ENCODE measurements at regions of chr3 and their contacts with region 1.

Region 1: DNA sequence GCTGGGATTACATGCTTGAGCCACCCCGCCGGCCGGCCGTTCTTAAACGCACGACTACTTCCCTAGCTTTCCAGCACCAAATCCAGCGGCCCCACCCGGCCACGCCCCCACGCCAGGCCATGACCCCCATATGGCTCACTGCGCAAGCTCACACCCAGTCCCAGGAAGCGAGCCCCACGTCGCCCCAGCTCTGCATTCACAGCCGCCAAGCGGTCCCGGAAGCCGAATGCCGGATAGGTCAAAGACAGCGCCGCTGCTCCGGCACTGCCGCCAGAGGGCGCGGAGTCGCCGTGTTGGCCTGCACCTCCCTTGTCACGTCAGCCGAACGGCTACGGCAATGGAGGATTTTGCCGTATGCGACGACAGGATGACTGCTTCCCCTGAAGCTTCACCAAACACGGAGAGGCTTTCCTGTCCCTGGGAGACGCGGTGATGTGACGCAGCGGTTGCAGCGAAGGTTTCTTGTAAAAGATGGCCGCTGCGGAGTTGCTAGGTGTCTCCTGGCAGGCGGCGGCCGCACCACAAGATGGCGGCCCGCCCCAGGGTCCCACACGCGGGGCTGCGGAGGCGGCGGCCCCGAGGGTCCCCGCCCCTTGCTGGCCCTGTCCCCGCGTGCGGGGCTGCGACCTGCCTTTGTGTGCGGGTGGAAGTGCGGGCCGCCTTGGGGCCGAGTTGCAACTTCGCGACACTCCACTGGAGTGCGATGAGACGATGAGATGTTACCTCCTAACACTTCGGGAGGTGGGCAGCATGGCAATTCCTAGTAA is 30.2 kb upstream of the RPN1 start:
- DNase-seq: peak; percentile 98 to 99
- H3K4me3 ChIP-seq: peak overlapping the region; percentile 29 to 77 (median 66)
- H3K27ac ChIP-seq: peak overlapping the region; percentile 99
- H3K4me1 ChIP-seq: peaks cover 0 to 4% (median 2%) of the 10 kb centered on the region in 4 experiments; a peak in 1 of 7 replicates
- H3K27me3 ChIP-seq: peaks cover 3 to 17% (median 12%) of the 10 kb centered on the region in 4 experiments
- CTCF ChIP-seq: peak; percentile 95 to 100 (median 99)
- EP300 ChIP-seq: peak in 1 of 2 experiments; percentile 5; a peak in 2 of 3 replicates
- POLR2A ChIP-seq: peak; percentile 78 to 91
- RAD21 ChIP-seq: peak; percentile 78 to 79

Region 2: DNA sequence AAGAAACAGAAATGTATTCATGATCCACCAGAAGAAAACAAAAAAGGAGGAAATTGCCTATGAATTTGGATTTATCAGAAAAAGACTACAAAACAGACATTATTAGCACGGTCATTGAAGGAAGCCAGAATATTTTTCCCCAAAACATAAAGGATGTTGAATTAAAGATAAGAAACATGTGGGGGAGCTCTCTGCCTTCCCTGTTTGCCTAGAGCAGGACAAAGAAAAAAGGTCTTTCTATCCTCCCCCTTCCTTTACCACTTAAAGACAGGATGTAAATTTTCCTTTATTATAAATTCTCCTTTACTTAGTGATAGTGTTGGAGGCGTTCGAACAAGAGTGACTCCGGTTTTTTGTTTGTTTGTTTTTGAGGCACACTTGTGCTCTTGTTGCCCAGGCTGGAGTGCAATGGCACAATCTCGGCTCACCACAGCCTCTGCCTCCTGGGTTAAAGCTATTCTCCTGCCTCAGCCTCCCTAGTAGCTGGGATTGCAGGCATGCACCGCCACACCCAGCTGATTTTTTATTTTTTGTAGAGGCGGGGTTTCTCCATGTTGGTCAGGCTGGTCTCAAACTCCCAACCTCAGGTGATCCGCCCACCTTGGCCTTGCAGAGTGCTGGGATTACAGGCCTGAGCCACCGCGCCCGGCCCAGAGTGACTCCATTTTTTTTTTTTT is 15.3 kb before region 1 on chr3:
- CTCF ChIA-PET with region 1: interaction called, 12 read pairs
- POLR2A ChIA-PET with region 1: interaction called, 13 read pairs
- DNase-seq: no peak
- H3K4me3 ChIP-seq: no peak overlapping the region
- H3K27ac ChIP-seq: no peak overlapping the region
- H3K4me1 ChIP-seq: no peaks in the 10 kb centered on the region
- H3K27me3 ChIP-seq: no peaks in the 10 kb centered on the region
- CTCF ChIP-seq: peak in 1 of 3 experiments; percentile 8; a peak in 2 of 4 replicates
- EP300 ChIP-seq: no peak
- POLR2A ChIP-seq: no peak
- RAD21 ChIP-seq: peak; percentile 48 to 51; a peak in 3 of 4 replicates

Region 3: DNA sequence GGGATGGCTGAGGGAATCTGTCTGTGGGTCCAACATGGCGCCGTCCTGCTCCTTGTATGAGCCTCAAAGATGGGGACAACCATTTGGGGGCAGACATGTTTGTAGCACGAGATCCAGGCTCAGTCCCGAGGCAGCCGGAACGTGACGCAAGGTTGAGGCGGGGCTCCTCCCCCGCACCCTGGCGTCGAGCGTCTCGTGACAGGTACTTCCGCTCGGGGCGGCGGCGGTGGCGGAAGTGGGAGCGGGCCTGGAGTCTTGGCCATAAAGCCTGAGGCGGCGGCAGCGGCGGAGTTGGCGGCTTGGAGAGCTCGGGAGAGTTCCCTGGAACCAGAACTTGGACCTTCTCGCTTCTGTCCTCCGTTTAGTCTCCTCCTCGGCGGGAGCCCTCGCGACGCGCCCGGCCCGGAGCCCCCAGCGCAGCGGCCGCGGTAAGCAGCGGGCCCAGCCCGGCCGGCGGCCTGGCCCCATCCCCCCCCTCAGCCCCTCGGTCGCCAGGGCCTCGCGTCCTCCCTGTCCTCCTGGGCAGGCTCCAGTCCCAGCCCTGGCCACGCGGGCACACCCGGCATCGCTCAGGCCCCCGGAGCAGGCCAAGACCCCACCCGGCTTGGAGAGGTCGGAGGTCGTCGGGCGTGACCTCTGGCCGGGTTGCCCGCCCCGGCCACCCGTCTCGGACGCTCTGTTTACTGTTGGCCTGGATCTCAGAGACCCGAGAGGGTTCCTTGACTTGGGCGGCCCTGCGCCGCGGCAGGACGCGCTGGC is 45.3 kb after region 1 on chr3 and contains the start of gene RAB7A:
- CTCF ChIA-PET with region 1: interaction called, 5 read pairs
- POLR2A ChIA-PET with region 1: interaction called, 44 read pairs
- DNase-seq: peak; percentile 93 to 96
- H3K4me3 ChIP-seq: peak within 1 kb of the TSS; percentile 80 to 94 (median 91)
- H3K27ac ChIP-seq: peak within 1 kb of the TSS; percentile 88
- H3K4me1 ChIP-seq: peaks cover 6 to 32% (median 21%) of the 10 kb centered on the region in 4 experiments
- H3K27me3 ChIP-seq: no peaks in the 10 kb centered on the region
- CTCF ChIP-seq: no peak
- EP300 ChIP-seq: peak in 1 of 2 experiments; percentile 59; a peak in 2 of 3 replicates
- POLR2A ChIP-seq: peak; percentile 91 to 98
- RAD21 ChIP-seq: no peak
- total RNA-seq, gene RAB7A: 185 and 195 TPM in 2 replicates

Region 4: DNA sequence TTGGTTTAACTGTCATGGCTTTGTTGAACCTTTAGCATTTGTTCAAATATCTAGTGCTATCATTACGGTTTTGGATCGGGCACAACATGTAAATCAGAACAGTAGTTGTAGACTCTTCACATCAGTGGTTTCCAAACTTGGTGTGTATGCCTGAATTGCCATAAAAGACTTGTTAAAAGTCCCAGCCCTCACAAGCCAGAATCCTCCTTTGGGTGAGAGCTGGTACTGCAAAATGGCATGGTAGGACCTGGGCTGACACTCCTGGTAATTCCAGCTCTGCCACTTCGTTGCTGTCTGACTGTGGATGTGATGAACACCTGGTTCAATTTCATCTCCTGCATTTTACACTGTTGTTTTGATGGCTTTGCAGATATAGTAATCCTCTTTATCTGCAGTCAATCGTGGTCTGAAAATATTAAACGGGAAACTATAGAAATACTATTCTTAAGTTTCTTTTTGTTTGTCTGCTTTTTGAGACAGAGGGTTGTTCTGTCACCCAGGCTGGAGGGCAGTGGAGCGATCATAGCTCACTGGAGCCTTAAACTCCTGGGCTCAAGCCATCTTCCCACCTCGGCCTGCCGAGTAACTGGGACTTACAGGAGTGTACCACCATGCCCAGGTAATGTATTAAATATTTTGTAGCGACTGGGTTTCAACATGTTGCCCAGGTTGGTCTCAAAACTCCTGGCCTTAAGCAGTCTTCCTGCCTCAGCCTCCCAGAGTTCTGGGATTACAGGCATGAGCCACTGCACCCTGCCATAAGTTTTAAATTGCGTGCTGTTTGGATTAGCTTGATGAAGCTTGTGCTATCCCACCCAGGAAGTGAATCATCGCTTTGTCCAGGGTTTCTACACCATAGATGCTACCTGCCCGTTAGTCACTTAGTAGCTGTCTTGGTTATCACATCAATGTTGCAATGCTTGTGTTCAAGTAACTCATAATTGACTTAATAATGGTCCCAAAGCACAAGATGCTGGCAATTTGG is 106.8 kb after region 1 on chr3:
- CTCF ChIA-PET with region 1: interaction called, 64 read pairs
- POLR2A ChIA-PET with region 1: interaction called, 5 read pairs
- DNase-seq: peak in 1 of 2 experiments; percentile 62
- H3K4me3 ChIP-seq: no peak overlapping the region
- H3K27ac ChIP-seq: no peak overlapping the region
- H3K4me1 ChIP-seq: peaks cover 0 to 11% (median 10%) of the 10 kb centered on the region in 4 experiments; a peak in 3 of 7 replicates
- H3K27me3 ChIP-seq: no peaks in the 10 kb centered on the region
- CTCF ChIP-seq: peak; percentile 42 to 68 (median 53)
- EP300 ChIP-seq: no peak
- POLR2A ChIP-seq: no peak
- RAD21 ChIP-seq: peak; percentile 27 to 37; a peak in 3 of 4 replicates

Region 5: DNA sequence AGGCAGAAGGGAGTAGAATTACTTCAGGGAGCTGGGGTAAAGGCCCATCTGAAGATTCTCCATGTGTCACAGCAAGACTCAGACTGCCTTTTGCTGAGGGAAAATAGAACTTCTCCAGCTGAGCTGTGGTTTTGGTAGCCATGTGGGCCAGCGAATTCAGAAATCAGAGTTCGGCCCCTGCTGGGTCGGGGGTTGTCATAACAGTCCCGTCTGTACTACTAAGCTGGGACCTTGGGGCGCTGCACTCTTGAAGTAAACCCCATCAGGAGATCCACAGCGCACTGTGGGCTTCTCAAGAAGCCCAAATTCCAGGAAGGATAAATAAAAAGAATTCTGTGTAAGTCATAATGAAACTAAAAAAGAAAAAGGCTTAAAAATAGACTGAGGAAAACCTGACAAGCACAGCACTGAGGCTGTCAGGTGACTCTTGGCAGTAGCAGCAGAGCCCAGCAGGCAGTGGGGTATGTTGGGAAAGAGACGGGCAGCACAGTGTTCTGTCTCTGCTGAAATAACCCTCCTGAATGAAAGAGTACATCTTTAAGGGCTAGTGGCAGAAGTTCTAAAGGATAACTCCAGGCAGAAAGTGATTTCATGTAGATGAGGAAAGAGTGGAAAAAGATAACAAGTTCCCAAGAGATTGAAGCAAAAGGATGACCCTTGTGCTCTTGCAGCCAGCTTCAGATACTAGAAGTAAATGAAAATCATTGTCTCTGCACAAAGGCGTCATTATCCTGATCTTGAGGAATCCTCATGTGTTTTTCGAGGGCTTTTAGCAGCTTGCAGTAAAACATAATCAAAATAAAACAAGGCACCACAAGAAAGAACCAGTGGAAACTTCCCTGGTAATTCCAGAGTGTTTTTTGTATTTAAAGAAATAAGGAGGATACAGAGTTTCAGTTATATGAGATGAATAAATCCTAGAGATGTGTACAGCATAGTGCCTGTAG is 119.7 kb after region 1 on chr3:
- CTCF ChIA-PET with region 1: interaction called, 64 read pairs
- POLR2A ChIA-PET with region 1: interaction called, 13 read pairs
- DNase-seq: no peak
- H3K4me3 ChIP-seq: no peak overlapping the region
- H3K27ac ChIP-seq: no peak overlapping the region
- H3K4me1 ChIP-seq: peaks cover 0 to 2% (median 0%) of the 10 kb centered on the region in 4 experiments; a peak in 3 of 7 replicates
- H3K27me3 ChIP-seq: no peaks in the 10 kb centered on the region
- CTCF ChIP-seq: no peak
- EP300 ChIP-seq: no peak
- POLR2A ChIP-seq: no peak
- RAD21 ChIP-seq: no peak